ENCODE measurements at regions of chr6 and their contacts with region 1.

Region 1: DNA sequence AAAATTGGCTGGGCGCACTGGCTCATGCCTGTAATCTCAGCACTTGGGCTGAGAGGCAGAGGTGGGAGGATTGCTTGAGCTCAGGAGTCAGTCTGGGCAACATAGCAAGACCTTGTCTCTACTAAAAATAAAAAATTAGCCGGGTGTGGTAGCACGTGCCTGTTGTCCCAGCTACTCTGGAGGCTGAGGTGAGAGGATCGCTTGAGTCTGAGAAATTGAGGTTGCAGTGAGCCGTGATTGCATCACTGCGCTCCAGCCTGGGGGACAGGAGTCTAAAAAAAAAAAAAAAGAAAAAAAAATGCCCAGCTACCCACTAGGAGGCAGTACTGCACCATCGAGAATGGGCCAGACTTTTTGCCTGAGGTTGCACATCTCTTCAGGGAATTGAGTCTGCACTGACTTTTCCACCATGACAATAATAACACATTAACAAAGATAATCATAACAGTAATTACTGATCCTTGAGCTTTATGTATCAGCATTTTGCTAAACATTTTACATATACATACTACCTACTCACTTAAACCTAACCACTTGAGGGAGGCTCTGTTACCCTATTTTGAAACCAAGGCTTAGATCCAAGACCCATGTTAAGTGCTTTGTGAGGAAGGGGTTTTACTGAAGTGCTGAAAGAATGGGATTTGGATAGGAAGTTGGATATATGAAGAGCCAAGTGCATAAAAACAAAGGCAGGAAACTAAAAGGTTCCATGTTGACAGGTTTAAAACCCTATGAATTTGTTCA is 21.0 kb downstream of the SRSF3 start:
- DNase-seq: no peak
- ATAC-seq: peak; percentile 84
- H3K4me3 Mint-ChIP-seq: no peak overlapping the region
- H3K27ac Mint-ChIP-seq: peak overlapping the region; percentile 66
- H3K4me1 Mint-ChIP-seq: peaks cover 21% of the 10 kb centered on the region
- H3K27me3 Mint-ChIP-seq: no peaks in the 10 kb centered on the region
- CTCF ChIP-seq: peak; percentile 83

Region 2: DNA sequence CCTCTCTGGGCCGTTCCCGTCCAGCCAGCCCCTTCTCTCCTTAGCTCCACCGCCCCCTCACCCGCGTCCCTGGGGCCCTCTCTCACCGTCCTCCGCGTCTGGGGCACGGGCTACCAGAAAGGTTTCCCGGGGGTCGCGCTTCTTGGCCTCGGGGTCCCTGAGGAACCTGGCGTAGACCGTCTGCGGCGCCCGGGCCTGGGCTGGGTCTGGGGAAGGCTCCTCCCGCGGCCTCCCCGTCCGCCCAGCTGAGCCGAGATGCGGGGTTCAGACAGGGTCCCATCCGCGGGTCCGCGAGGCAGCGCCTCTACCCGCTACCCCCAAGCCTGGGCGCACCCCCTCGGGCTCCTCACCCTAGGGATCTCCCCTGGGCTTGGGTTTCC is 1103.6 kb before region 1 on chr6:
- CTCF ChIA-PET with region 1: no interaction called
- POLR2A ChIA-PET with region 1: no interaction called
- intact Hi-C with region 1: no loop called
- DNase-seq: no peak
- ATAC-seq: no peak
- H3K4me3 Mint-ChIP-seq: no peak overlapping the region
- H3K27ac Mint-ChIP-seq: no peak overlapping the region
- H3K4me1 Mint-ChIP-seq: peaks cover 3% of the 10 kb centered on the region
- H3K27me3 Mint-ChIP-seq: peaks cover 36% of the 10 kb centered on the region
- CTCF ChIP-seq: no peak

Region 3: DNA sequence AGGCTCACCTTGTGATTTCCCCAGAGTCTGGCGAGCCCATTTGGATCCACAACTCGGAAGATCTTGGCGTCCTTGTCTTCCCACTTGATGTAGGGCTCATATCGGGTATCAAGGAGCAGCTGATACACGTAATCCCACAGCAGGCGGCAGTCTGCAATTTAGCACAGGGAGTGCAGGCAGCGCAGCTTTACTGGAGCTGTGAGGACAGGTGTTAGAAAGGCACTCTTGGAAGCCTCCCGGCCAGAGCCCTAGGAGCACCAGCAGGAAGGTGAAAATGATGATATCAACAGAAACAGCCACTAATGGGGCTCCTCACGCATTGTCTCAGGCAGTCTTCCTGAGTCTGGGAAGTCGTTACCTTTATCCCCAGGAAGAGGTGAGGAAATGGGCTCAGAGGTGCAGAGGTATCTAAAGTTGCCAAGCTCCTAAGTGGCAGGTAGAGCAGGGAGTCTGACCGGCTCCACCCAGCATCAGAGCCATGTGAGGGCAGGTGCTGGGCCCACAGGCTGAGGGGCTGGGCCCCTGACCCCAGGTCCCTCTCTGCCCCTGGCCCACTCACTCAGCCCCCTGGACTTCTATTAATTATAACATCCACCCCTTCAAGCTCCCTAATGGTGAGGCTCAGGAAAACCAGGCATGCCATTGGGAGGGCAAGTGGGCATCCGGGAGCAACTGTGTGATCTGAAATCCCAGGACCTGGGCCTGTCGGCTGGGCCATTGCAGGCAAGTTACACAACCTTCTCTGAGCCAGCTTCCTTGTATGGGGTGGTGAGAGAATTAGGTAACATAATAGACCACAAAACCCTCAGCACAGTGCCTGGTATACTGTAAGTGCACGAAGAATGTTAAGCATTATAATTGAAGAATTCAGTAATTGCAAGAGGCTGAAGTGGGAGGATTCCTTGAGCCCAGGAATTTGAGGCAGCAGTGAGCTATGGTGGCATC is 246.0 kb before region 1 on chr6:
- CTCF ChIA-PET with region 1: no interaction called
- POLR2A ChIA-PET with region 1: no interaction called
- intact Hi-C with region 1: no loop called
- DNase-seq: no peak
- ATAC-seq: no peak
- H3K4me3 Mint-ChIP-seq: no peak overlapping the region
- H3K27ac Mint-ChIP-seq: no peak overlapping the region
- H3K4me1 Mint-ChIP-seq: peaks cover 11% of the 10 kb centered on the region
- H3K27me3 Mint-ChIP-seq: peaks cover 5% of the 10 kb centered on the region
- CTCF ChIP-seq: no peak

Region 4: GRCh38 chr6:36639171-36639808 is 24.1 kb after region 1 on chr6:
- CTCF ChIA-PET with region 1: no interaction called
- POLR2A ChIA-PET with region 1: no interaction called
- intact Hi-C with region 1: no loop called
- DNase-seq: no peak
- ATAC-seq: no peak
- H3K4me3 Mint-ChIP-seq: no peak overlapping the region
- H3K27ac Mint-ChIP-seq: no peak overlapping the region
- H3K4me1 Mint-ChIP-seq: no peaks in the 10 kb centered on the region
- H3K27me3 Mint-ChIP-seq: no peaks in the 10 kb centered on the region
- CTCF ChIP-seq: no peak

Region 5: GRCh38 chr6:36724514-36725390 is 109.6 kb after region 1 on chr6:
- CTCF ChIA-PET with region 1: interaction called, 12 read pairs
- POLR2A ChIA-PET with region 1: interaction called, 13 read pairs
- intact Hi-C with region 1: loop called (anchors 1 kb)
- DNase-seq: no peak
- ATAC-seq: peak; percentile 14
- H3K4me3 Mint-ChIP-seq: no peak overlapping the region
- H3K27ac Mint-ChIP-seq: peak overlapping the region; percentile 25
- H3K4me1 Mint-ChIP-seq: peaks cover 57% of the 10 kb centered on the region
- H3K27me3 Mint-ChIP-seq: no peaks in the 10 kb centered on the region
- CTCF ChIP-seq: no peak

Region 6: DNA sequence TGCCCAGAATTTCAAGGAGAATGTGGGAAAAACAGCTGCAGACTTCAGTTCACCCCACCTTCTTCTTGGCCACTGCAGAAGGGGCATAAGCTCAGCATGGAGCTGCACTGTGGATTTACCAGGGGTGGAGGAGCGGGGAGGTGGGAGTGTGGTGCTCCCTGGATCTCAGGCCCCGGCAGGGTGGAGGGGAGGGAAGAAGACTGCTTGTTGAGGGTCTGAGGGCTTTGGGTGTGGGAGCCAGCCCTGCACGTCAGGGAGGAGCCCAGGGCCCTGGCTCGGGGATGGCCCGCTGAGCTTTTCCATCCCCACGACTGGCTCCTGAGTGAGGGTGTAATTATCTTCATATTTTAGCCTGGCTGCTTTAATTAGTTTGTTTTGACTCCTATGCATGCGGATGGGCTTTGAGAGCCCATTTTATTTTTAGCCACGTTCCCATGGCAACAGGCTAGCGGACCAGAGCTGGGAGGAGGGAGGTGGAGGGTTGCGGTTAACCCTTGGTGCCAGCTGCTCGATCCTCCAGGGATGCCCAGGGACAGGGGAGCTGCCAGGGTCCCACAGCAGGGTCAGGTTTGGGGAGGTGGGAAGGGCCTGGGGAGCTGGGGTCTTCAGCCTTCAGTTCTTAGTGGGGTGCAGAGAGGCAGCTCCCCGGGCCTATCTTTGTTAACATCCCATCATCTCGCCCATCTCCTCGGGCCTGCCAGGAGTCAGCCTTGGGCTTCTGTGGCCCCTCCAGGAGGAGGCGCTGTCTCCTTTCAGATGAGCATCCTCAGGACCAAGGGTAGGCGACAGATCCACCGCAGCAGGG is 150.6 kb after region 1 on chr6:
- CTCF ChIA-PET with region 1: interaction called, 121 read pairs
- POLR2A ChIA-PET with region 1: interaction called, 16 read pairs
- intact Hi-C with region 1: no loop called
- DNase-seq: peak; percentile 66
- ATAC-seq: peak; percentile 92
- H3K4me3 Mint-ChIP-seq: peak overlapping the region; percentile 44
- H3K27ac Mint-ChIP-seq: peak overlapping the region; percentile 24
- H3K4me1 Mint-ChIP-seq: peaks cover 48% of the 10 kb centered on the region
- H3K27me3 Mint-ChIP-seq: no peaks in the 10 kb centered on the region
- CTCF ChIP-seq: peak; percentile 63

Region 7: DNA sequence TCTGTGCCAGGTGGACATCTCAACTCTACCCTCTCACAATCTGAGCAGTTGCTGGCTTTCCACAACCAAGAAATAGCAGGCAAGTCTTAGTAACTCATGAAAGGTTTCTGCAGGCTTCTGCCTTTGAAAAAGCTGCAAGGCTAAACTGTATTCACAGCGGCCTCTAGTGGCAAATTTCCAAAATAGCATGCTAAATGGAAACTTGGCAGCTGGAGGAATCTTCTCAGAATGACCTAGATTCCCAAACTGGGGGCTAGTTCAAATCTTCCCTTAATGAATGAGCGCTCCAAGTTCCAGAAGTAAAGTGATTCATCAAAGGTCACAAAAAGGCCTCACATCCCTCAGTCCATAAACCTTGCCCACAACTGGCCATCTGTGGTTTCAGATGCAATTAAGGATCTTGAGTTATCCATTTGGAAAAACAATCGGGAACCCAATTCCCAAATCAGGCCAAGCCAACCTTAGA is 236.0 kb after region 1 on chr6:
- CTCF ChIA-PET with region 1: interaction called, 12 read pairs
- POLR2A ChIA-PET with region 1: no interaction called
- intact Hi-C with region 1: loop called (anchors 1 kb)
- DNase-seq: no peak
- ATAC-seq: no peak
- H3K4me3 Mint-ChIP-seq: no peak overlapping the region
- H3K27ac Mint-ChIP-seq: no peak overlapping the region
- H3K4me1 Mint-ChIP-seq: peaks cover 6% of the 10 kb centered on the region
- H3K27me3 Mint-ChIP-seq: peaks cover 2% of the 10 kb centered on the region
- CTCF ChIP-seq: no peak